ENCODE measurements at regions of chr21 and their contacts with region 1.

Region 1: GRCh38 chr21:36927719-36928117 is 38.8 kb downstream of the HLCS start:
- DNase-seq: peak; percentile 78
- CTCF ChIP-seq: peak; percentile 94

Region 2: GRCh38 chr21:36419996-36420395 is 507.7 kb before region 1 on chr21:
- CTCF ChIA-PET with region 1: interaction called, 11 read pairs
- POLR2A ChIA-PET with region 1: no interaction called
- DNase-seq: peak; percentile 86
- CTCF ChIP-seq: peak; percentile 73

Region 3: DNA sequence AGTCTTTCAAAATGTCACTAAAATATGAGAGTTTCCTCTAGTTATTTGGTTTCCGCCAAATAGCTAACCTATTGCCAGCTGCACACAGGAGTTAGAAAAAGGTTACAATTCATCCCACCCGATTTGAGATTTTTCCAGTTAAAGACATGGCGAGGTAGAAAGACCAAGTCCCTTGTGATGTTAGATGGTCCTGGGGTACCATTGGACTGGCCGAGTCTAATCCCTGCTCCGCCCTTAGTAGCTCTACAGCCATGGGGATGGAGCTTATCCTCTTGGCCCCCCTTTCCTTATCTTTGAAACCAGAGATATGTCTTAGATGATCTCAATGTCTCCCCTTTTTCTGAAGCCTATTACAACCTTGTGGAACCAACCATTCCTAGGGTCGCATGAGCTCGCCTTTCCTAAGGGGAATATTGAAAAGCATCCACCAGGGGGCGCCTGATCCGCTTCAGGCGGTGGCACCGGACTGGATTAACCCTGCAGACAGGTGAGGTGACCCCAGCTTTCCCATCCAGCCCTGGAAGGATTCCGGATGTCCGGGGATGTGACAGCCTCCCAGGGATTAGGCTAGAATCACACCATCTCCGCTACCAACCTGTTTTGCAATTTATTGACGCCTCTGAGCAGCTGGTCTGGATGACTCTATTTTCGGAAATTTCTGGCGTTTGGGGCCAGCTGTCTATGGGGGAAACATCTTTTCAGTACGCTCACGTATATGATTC is 297.1 kb before region 1 on chr21:
- CTCF ChIA-PET with region 1: interaction called, 28 read pairs
- POLR2A ChIA-PET with region 1: no interaction called
- DNase-seq: peak; percentile 74
- CTCF ChIP-seq: peak; percentile 74

Region 4: GRCh38 chr21:36917471-36918158 is 10.1 kb before region 1 on chr21:
- CTCF ChIA-PET with region 1: interaction called, 13 read pairs
- POLR2A ChIA-PET with region 1: no interaction called
- DNase-seq: no peak
- CTCF ChIP-seq: peak; percentile 17

Measured in GM10248 (cell line).